Sigmoid colon (tissue), 7 donors: ENCODE measurements at regions of chr6 and their contacts with region 1.

Region 1: DNA sequence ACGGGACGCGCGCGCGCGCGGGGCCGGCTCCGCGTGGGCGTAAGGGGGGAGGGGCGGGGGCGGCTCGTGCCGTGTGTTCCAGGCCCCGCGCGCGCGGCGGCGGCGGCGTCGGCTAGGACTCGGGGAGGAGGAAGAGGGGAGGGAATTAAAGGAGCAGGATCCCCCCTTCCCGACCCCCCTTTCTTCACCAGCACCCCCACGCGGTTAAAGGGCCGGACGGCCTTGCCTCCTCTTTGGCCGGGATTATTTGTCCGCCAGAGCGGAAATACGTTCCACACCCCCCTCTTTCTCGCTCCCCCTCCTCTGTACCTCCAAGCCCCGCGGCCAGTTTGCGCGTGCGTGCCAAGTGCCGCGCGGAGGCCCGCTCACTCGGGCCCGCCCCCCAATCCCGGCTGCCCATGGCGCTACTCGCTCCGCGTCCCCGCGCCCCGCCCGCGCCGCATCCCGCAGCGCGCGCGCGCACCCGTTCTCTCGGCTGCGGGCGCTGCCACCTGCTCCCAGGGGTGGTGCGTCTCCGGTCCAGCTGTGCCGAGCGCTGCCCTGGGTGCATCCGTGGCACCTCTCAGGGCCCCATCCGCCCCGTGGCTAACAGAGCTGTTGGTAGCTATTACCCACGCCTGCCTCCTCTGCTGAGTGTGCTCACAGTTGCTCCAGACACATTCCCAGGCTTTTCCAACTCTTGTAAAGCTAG is at the start of gene ZBTB12:
- DNase-seq: peak; percentile 98
- H3K4me3 ChIP-seq: peak within 1 kb of the TSS; percentile 37 to 81 (median 71)
- H3K27ac ChIP-seq: peak within 1 kb of the TSS; percentile 84 to 93 (median 90)
- H3K4me1 ChIP-seq: peaks cover 3 to 44% (median 38%) of the 10 kb centered on the region in 4 donors
- H3K27me3 ChIP-seq: no peaks in the 10 kb centered on the region
- CTCF ChIP-seq: peak in 1 of 4 experiments; percentile 12
- EP300 ChIP-seq: no peak
- POLR2A ChIP-seq: peak; percentile 24 to 37
- total RNA-seq, gene ZBTB12: 0.83 to 2.1 (median 1.1) TPM

Region 2: DNA sequence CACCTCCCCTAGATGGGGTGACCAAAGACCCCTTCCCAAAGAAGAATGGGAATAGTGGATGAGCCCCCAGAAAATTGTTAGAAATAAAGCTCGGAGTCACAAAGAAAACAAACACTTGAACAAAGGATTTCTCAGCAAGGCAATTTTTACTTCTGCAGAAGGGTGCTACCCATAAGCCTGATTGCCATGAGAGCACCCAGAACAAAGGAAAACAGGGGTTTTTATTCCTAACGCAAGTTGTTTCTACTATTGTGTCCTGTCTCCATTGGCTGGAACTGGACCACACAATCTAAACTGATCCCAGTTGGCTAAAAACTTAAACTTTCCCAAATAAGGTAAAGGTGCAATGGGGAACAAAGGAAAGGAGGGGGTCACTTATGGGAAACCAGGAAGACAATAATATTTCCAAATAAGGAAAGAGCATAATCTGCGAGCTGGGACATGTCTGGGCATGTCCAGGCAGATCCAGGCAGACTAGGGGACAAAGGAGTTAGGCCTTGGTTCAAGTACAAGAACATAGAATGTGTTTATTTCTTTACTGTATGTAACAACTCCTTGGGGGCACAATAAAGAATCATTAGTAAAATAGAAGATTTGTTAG is 565.1 kb before region 1 on chr6:
- intact Hi-C with region 1: no loop called
- DNase-seq: no peak
- H3K4me3 ChIP-seq: no peak overlapping the region
- H3K27ac ChIP-seq: no peak overlapping the region
- H3K4me1 ChIP-seq: no peaks in the 10 kb centered on the region
- H3K27me3 ChIP-seq: no peaks in the 10 kb centered on the region
- CTCF ChIP-seq: no peak
- EP300 ChIP-seq: no peak
- POLR2A ChIP-seq: no peak

Region 3: GRCh38 chr6:31769684-31770371 is 132.3 kb before region 1 on chr6:
- intact Hi-C with region 1: no loop called
- DNase-seq: peak; percentile 80
- H3K4me3 ChIP-seq: no peak overlapping the region
- H3K27ac ChIP-seq: no peak overlapping the region
- H3K4me1 ChIP-seq: peaks cover 0 to 10% (median 7%) of the 10 kb centered on the region in 4 donors
- H3K27me3 ChIP-seq: peaks cover 0 to 14% (median 3%) of the 10 kb centered on the region in 3 donors
- CTCF ChIP-seq: peak; percentile 32 to 83 (median 70)
- EP300 ChIP-seq: no peak
- POLR2A ChIP-seq: no peak

Region 4: DNA sequence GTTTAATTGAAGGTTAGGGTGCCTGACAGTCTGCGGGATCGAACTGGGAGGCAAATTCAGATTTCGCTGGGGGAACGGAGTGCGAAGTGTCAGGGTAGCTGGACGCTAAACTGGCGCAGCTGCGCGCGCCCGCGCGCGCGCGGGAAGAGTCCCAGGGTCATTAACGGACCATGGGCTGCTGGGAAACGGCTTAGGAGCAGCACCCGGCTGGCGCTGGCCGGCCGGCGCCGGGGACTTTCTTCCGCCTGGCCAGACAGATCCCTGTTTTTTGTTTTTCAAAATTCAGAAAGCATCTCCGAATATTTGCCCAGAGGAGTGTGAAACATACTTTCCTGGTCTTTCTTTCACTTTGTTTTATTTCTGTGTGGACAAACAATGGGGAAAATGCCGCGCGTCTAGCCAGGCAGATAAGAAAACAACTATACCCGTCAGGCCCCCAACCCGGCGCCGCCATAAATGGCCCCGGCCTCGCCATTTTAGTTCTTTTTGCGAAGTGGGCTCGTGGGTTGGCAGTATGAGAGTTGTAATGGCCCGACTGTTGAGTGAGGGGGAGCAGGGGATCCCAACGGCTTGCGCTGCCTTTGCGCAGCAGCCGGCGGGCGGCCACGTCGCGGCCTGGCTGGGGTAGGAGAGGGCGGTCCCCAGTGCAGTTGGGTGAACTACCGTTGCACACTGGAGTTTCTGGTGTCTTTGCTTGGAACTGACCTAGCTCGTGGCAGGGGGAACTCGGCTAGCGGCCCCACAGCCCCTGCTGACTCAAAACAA is 67.5 kb before region 1 on chr6:
- intact Hi-C with region 1: loop called (anchors 2 kb)
- DNase-seq: peak; percentile 93
- H3K4me3 ChIP-seq: peak overlapping the region; percentile 63 to 85 (median 74)
- H3K27ac ChIP-seq: peak overlapping the region; percentile 90 to 96 (median 94)
- H3K4me1 ChIP-seq: peaks cover 0 to 67% (median 59%) of the 10 kb centered on the region in 4 donors
- H3K27me3 ChIP-seq: no peaks in the 10 kb centered on the region
- CTCF ChIP-seq: no peak
- EP300 ChIP-seq: peak in 2 of 4 donors; percentile 55 to 59
- POLR2A ChIP-seq: peak; percentile 42 to 70

Region 5: DNA sequence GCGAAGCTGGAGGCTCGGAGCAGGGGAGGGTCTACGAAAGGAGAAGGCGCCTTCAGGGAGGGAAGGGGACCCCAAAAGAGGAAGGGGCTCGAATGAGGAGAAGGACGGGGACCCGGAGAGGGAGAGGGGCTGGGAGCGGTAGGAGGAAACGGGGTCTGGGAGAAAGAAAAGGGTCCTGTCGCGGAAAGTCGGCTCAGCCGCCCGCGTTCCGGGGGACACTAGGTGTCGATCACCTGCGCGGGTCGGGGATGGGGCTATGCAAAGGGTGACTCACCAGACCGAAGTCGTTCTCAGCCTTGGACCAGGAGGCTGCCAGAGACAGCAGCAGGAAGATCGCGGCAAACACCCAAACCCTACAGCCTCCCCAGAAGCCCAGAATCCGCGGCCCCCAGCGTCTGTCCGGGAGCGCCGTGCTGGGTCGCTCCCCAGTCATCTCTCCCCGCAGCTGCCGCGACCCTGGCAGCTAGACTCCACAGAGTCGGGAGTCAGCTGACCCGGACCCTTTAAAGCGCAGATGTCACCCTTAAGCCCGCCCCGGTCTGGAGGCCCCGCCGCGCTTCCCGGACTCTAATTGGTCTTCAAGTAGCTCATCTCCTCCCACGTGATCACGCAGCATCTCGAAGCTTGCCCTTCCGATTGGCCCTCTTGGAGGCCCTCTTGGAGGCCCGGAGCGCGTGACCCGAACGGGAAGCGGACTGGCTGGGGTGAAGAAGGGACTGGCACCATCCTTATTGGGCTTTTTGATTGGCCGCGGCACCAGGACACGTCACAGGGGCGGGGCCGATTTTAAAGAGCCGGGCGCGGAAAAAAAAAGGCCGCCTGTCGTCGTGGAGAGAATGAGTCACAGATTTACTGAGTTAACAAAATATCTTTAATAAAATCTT is 39.5 kb before region 1 on chr6 and contains the start of gene NEU1:
- intact Hi-C with region 1: loop called (anchors 2 kb)
- DNase-seq: peak; percentile 100
- H3K4me3 ChIP-seq: peak within 1 kb of the TSS; percentile 60 to 74 (median 68)
- H3K27ac ChIP-seq: peak within 1 kb of the TSS; percentile 84 to 89 (median 88)
- H3K4me1 ChIP-seq: peaks cover 0 to 25% (median 15%) of the 10 kb centered on the region in 4 donors
- H3K27me3 ChIP-seq: no peaks in the 10 kb centered on the region
- CTCF ChIP-seq: no peak
- EP300 ChIP-seq: peak in 2 of 4 donors; percentile 7 to 61
- POLR2A ChIP-seq: peak; percentile 97
- total RNA-seq, gene NEU1: 31.3 to 43.2 (median 33.6) TPM

Region 6: GRCh38 chr6:31958741-31959739 is 56.9 kb after region 1 on chr6 and contains the starts of genes NELFE and SKIC2:
- intact Hi-C with region 1: loop called (anchors 2 kb)
- DNase-seq: peak; percentile 99
- H3K4me3 ChIP-seq: peak within 1 kb of the TSS; percentile 65 to 92 (median 83)
- H3K27ac ChIP-seq: peak within 1 kb of the TSS; percentile 77 to 91 (median 88)
- H3K4me1 ChIP-seq: peaks cover 0 to 25% (median 22%) of the 10 kb centered on the region in 4 donors
- H3K27me3 ChIP-seq: no peaks in the 10 kb centered on the region
- CTCF ChIP-seq: no peak
- EP300 ChIP-seq: peak in 1 of 4 donors; percentile 48
- POLR2A ChIP-seq: peak; percentile 46 to 52
- total RNA-seq, gene NELFE: 60.1 to 96.9 (median 75.8) TPM
- total RNA-seq, gene SKIC2: 22.1 to 73.4 (median 33.4) TPM

Region 7: DNA sequence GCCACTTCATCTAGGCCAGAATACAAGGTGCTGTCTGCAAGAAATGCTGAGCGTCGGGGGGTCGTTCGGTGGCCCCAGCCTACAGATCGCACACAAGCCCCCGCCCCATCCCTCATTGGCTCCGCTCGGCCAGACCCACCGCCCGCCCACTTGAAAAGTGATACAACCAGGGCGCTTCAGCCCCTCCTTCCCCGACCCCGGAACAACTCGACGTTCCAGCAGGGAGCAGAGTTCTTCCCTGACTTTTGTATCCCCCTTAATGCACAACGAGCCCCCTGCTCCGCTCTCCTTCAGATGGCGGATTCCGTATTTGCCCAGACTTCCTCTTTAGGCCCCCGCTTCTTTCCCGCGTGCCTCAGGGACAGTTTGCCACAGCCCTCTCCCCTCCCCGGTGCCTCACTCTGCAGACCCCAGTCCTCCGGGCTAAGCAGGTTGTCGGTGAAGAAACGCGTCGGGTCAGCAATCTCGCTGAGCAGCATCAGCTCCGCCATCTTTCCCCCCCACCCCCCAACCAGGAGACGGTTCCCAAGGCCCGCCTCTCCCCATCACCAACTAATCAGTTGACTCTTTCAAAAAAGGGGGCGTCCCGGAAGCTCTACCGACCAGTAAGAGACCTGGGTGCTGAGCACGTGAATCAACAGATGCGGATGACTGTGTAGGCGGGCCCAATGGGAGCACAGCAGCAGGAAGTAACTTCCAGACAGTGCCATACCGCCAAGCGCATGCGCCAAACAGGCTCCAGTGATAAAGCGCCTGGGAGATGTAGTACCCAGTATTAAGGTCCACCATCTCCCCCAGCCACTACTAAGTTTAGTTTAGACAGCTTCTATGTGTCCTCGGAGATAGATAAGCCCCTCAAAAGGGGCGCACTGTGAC is 225.9 kb after region 1 on chr6 and contains the start of gene ATF6B:
- intact Hi-C with region 1: loop called (anchors 10 kb)
- DNase-seq: peak; percentile 100
- H3K4me3 ChIP-seq: peak within 1 kb of the TSS; percentile 77 to 92 (median 83)
- H3K27ac ChIP-seq: peak within 1 kb of the TSS; percentile 91 to 94 (median 92)
- H3K4me1 ChIP-seq: peaks cover 0 to 36% (median 31%) of the 10 kb centered on the region in 4 donors
- H3K27me3 ChIP-seq: no peaks in the 10 kb centered on the region
- CTCF ChIP-seq: no peak
- EP300 ChIP-seq: no peak
- POLR2A ChIP-seq: peak; percentile 68 to 76
- total RNA-seq, gene ATF6B: 24.5 to 73.4 (median 24.8) TPM

Region 8: DNA sequence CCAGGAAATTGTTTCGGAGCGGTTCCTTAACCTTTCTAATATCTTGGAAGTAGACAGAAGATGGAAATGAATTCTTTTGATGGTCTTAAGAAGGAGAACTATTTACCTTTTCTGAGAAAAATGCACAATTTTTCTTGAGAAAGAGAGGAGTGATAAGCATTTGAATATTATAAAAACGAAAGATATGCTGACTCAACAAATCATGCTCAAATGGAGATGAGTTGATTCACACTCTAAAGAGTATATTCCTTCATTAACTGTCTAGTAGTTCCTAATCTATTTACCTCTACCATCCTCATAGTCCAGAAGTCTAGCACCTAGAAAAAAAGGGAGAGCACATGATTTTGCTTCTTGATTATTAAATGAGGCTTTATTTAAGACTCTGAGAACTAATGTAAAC is 465.5 kb after region 1 on chr6:
- intact Hi-C with region 1: no loop called
- DNase-seq: no peak
- H3K4me3 ChIP-seq: no peak overlapping the region
- H3K27ac ChIP-seq: no peak overlapping the region
- H3K4me1 ChIP-seq: no peaks in the 10 kb centered on the region
- H3K27me3 ChIP-seq: no peaks in the 10 kb centered on the region
- CTCF ChIP-seq: no peak
- EP300 ChIP-seq: no peak
- POLR2A ChIP-seq: no peak